ENCODE measurements at regions of chr1 and their contacts with region 1.

Region 1: GRCh38 chr1:59143133-59143487 is 153.8 kb upstream of the FGGY start:
- DNase-seq: no peak
- ATAC-seq: peak in 1 of 2 donors; percentile 23
- H3K4me3 ChIP-seq: no peak overlapping the region
- H3K27ac ChIP-seq: peak overlapping the region; percentile 65 to 91 (median 78)
- H3K4me1 ChIP-seq: peaks cover 27 to 45% of the 10 kb centered on the region in 2 donors
- H3K27me3 ChIP-seq: no peaks in the 10 kb centered on the region
- CTCF ChIP-seq: no peak
- POLR2A ChIP-seq: no peak

Region 2: DNA sequence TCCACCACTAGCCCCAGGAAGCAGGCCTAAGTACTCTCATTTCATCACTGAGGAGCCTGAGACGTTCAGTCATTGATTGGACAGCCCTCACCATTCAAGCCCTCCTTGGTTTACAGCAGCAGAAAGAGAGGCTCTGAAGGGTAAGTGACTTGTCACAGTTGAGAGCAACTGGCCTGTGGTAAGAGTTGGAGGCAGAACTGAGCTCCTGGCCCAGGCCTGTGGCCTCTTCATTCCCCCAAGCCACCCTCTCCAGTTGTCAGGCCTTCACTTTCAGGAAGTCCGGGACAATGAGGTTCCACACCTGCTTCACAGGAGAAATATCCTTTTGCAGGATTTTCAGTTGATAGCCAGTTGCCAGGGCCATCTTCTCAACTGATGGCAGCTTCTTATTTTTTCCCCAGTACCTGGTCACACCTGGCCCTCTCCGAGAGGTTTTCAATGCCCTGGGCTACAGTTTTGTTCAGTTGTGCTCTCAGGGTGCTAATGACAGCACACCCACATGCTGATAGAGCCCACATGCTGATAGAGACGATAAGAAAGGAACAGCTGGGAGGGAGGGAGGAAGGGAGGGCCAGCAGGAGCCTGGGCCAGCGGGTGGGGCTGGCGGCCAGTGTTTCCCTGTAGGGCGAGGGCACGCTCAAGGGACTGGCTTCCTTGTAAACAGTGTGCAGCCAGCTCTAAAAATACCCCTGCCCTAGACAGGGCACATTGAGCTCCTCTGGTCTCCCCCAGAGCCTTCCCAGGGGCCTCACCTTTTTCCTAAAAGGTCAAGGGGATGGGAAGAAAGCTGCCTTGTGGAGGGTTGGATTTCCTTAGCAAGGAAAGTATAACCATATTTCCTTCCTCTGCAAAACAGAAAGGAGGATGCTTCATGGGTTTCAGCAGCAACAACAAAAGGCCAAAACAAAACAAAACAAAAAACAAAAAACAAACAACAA is 246.6 kb before region 1 on chr1:
- in situ Hi-C with region 1: no loop called
- intact Hi-C with region 1: loop called (anchors 5 kb)
- DNase-seq: peak; percentile 84 to 90
- ATAC-seq: peak; percentile 77 to 82
- H3K4me3 ChIP-seq: no peak overlapping the region
- H3K27ac ChIP-seq: peak overlapping the region; percentile 94 to 100 (median 94)
- H3K4me1 ChIP-seq: peaks cover 86% of the 10 kb centered on the region in 2 donors
- H3K27me3 ChIP-seq: no peaks in the 10 kb centered on the region
- CTCF ChIP-seq: no peak
- POLR2A ChIP-seq: peak in 1 of 2 donors; percentile 24

Region 3: GRCh38 chr1:59107516-59107915 is 35.6 kb before region 1 on chr1:
- in situ Hi-C with region 1: no loop called
- intact Hi-C with region 1: no loop called
- DNase-seq: peak; percentile 87 to 92
- ATAC-seq: peak; percentile 98 to 99
- H3K4me3 ChIP-seq: no peak overlapping the region
- H3K27ac ChIP-seq: peak overlapping the region; percentile 76 to 87 (median 79)
- H3K4me1 ChIP-seq: peaks cover 11 to 17% of the 10 kb centered on the region in 2 donors
- H3K27me3 ChIP-seq: no peaks in the 10 kb centered on the region
- CTCF ChIP-seq: no peak
- POLR2A ChIP-seq: no peak

Region 4: GRCh38 chr1:59124166-59124565 is 18.9 kb before region 1 on chr1:
- in situ Hi-C with region 1: no loop called
- intact Hi-C with region 1: no loop called
- DNase-seq: peak in 1 of 2 donors; percentile 50
- ATAC-seq: peak; percentile 98
- H3K4me3 ChIP-seq: no peak overlapping the region
- H3K27ac ChIP-seq: peak overlapping the region; percentile 61 to 63 (median 62)
- H3K4me1 ChIP-seq: peaks cover 10 to 16% of the 10 kb centered on the region in 2 donors
- H3K27me3 ChIP-seq: no peaks in the 10 kb centered on the region
- CTCF ChIP-seq: no peak
- POLR2A ChIP-seq: no peak

Region 5: DNA sequence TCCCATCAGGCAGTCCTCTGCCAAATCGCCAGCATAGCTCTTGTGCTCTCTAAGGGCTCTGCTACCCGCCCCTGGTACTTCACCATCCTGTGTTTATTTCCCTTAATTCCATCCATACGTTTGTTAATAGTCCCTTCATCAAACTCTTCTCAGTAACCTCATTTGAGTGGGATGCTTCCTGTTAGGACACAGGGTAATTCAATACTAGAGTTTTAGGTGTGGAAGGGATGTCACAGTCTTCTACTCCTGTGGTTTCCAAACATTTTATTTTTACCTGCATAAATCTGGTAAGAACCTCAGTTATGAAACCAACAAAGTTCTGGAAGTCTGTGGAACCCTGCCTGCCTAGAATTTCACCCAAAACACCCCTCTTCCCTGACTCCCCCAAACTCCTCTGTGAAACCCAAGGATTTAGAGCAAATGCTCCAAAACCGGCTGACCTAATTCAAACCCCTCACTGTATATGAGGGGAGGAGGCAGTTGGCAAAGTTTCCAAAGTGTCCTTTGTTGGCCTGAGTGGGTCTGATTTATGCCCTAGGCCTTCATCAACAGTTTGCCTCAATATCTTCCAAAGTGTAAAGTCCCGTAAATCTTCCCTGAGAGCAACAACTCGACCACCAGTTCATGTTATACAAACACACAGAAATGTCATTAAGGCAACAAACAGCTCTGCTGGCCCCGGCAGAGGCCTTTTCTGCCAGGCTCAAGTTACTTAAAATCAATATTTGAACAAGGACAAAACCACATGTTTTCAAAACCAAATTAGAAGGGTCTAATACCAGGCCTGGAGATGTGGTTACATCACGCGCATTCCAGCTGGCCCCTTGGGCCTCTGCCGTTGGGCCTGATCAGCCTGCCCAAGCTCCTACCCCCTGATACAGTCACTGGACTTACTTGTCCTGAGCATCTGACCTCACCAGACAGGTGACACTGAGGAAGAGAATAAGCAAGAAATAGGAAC is 71.4 kb after region 1 on chr1:
- in situ Hi-C with region 1: no loop called
- intact Hi-C with region 1: no loop called
- DNase-seq: no peak
- ATAC-seq: no peak
- H3K4me3 ChIP-seq: no peak overlapping the region
- H3K27ac ChIP-seq: no peak overlapping the region
- H3K4me1 ChIP-seq: no peaks in the 10 kb centered on the region
- H3K27me3 ChIP-seq: no peaks in the 10 kb centered on the region
- CTCF ChIP-seq: no peak
- POLR2A ChIP-seq: no peak

Region 6: DNA sequence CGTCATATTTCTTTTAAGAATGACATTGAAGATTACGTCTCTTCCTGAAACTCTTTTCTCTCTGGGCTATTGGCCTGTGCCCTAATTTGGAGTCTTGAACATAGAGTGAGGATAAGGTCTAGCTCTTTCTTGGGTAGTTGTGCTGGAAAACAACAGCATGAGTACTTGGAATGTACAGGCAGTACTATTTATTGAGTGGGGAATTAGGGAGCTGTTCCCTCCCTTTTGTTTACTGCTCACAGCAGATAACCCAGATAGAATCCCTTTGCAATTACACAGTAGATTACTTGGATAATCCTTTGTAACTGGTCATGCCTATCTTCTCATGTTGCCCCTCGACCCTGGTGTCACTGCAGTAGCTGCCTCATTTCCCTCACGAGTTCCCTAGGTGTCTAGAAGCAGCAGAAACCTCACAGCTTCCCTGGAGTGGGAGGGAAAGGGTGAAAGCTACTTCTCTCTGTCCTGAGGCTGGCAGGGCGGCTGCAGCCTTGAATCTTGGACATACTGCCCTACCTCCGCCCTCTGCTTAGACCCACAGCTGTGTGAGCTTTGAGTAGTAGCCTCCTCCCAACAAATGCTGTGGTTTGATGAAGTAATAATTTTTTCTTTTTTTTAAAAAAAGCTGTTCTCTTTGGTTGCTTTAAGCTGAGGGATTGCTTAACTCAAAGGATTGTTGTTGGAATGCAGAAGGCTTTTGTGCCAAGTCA is 224.3 kb after region 1 on chr1:
- in situ Hi-C with region 1: no loop called
- intact Hi-C with region 1: no loop called
- DNase-seq: peak; percentile 52 to 74
- ATAC-seq: peak; percentile 76 to 82
- H3K4me3 ChIP-seq: no peak overlapping the region
- H3K27ac ChIP-seq: peak overlapping the region; percentile 43 to 70 (median 61)
- H3K4me1 ChIP-seq: peaks cover 12 to 19% of the 10 kb centered on the region in 2 donors
- H3K27me3 ChIP-seq: no peaks in the 10 kb centered on the region
- CTCF ChIP-seq: no peak
- POLR2A ChIP-seq: peak in 1 of 2 donors; percentile 10

Region 7: DNA sequence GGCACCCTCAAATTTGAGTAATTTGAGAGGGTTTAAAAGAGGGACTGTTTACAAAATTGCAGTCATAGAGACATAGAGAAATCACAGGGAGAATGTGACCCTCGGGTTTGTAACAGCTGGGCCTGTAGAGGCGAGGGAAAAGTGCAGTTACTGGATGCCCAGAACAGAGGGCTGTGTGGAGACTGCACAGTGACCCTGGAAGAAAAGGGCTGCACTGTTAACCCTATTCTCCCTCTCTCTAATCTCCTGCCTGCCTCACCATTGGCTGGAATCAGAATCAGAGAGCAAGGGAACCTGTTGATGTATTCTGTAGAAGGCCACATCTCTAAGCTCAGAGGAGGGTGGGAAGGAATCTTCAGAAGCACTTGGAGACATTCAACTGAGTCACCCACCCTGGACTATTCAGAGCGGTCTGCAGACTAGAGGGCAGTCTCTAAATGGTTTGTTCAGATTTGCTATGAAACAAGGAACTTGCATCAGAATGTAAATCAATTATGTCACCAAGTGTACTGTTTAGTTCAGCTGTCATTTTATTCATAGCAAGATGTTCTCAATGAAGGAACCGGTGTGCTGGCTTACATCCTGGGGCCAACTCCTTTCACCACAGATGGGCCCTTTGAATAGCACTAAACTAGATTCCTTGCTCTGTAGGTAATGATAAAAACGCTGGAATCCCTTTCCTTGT is 539.4 kb after region 1 on chr1:
- in situ Hi-C with region 1: no loop called
- intact Hi-C with region 1: loop called (anchors 5 kb)
- DNase-seq: peak; percentile 62 to 76
- ATAC-seq: peak; percentile 65 to 73
- H3K4me3 ChIP-seq: no peak overlapping the region
- H3K27ac ChIP-seq: peak overlapping the region; percentile 85 to 89 (median 87)
- H3K4me1 ChIP-seq: peaks cover 57 to 77% of the 10 kb centered on the region in 2 donors
- H3K27me3 ChIP-seq: no peaks in the 10 kb centered on the region
- CTCF ChIP-seq: no peak
- POLR2A ChIP-seq: peak in 1 of 2 donors; percentile 60